ENCODE measurements at regions of chr7 and their contacts with region 1.

Region 1: GRCh38 chr7:104943502-104944343 is 70.3 kb upstream of the KMT2E start:
- DNase-seq: peak; percentile 93
- H3K4me3 Mint-ChIP-seq: peak overlapping the region; percentile 97
- H3K27ac Mint-ChIP-seq: peak overlapping the region; percentile 100
- H3K4me1 Mint-ChIP-seq: peaks cover 56% of the 10 kb centered on the region
- H3K27me3 Mint-ChIP-seq: peaks cover 3% of the 10 kb centered on the region

Region 2: DNA sequence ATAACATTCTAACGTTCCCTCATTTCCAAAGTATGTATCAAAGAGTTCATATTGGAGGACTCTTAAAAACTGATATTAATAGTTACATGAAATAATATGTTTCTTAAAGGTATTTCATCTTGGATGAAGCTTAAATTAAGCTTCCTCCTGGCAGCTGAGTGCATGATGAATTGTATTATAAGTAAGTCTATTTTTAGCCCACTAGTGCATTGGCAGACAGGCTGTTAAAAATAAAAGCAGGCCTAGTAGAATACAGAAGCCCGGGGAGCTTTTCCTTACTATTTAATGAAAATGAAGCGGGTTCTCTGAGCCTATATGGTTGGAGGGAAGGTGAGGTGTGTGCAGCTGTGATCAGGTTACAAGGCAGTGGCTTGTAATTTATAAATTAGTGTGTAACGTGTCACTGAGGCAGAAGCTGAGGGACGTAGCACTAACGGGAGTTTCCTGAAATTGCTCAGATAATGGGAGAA is 60.4 kb before region 1 on chr7:
- intact Hi-C with region 1: no loop called
- DNase-seq: no peak
- H3K4me3 Mint-ChIP-seq: no peak overlapping the region
- H3K27ac Mint-ChIP-seq: no peak overlapping the region
- H3K4me1 Mint-ChIP-seq: peaks cover 15% of the 10 kb centered on the region
- H3K27me3 Mint-ChIP-seq: peaks cover 14% of the 10 kb centered on the region

Region 3: GRCh38 chr7:104900525-104901239 is 43.0 kb before region 1 on chr7:
- intact Hi-C with region 1: no loop called
- DNase-seq: no peak
- H3K4me3 Mint-ChIP-seq: no peak overlapping the region
- H3K27ac Mint-ChIP-seq: no peak overlapping the region
- H3K4me1 Mint-ChIP-seq: peaks cover 6% of the 10 kb centered on the region
- H3K27me3 Mint-ChIP-seq: peaks cover 7% of the 10 kb centered on the region

Region 4: DNA sequence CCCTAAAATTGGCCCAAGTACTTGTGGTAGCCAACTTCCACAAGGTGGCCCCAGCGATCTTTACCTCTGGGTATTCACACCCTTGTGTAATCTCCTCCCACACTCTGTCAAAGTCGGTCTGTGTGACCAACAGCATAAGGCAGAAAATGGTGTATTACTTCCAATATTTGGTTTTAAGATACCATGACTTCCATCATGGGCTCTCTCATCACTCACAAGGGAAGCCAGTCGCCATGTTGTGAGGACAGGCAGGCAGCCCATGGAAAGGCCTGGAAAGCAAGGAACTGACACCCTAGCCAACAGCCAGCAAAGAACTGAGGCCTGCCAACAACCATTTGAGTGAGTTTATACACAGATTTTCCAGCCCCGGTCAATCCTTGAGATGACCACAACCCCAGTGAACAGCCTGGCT is 20.7 kb before region 1 on chr7:
- intact Hi-C with region 1: loop called (anchors 1 kb)
- DNase-seq: peak; percentile 93
- H3K4me3 Mint-ChIP-seq: no peak overlapping the region
- H3K27ac Mint-ChIP-seq: no peak overlapping the region
- H3K4me1 Mint-ChIP-seq: peaks cover 7% of the 10 kb centered on the region
- H3K27me3 Mint-ChIP-seq: peaks cover 4% of the 10 kb centered on the region

Region 5: GRCh38 chr7:104983578-104984539 is 40.1 kb after region 1 on chr7:
- intact Hi-C with region 1: loop called (anchors 1 kb)
- DNase-seq: peak; percentile 96
- H3K4me3 Mint-ChIP-seq: peak overlapping the region; percentile 98
- H3K27ac Mint-ChIP-seq: peak overlapping the region; percentile 100
- H3K4me1 Mint-ChIP-seq: peaks cover 53% of the 10 kb centered on the region
- H3K27me3 Mint-ChIP-seq: no peaks in the 10 kb centered on the region

Region 6: DNA sequence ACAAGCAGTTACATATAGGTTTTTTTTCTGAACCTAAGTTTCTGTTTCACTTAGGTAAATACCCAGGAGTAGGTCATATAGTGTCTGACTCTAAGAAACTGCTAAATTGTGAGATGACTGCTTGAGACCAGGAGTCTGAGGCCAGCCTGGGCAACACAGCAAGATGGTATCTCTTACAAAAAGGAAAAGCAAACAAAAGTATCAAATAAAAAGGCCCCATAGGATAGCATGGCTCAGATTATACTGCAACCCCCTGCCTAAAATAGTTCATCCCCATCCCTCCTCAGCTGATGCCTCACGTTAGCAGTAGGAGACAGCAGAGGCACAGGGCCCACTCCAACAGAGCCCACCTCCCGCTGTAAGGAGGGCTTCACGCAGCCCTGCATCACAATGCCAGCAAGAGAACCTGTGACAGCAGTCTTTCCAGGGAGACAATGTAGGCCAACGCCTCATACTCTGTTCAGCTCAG is 354.8 kb after region 1 on chr7:
- intact Hi-C with region 1: loop called (anchors 5 kb)
- DNase-seq: peak; percentile 76
- H3K4me3 Mint-ChIP-seq: peak overlapping the region; percentile 50
- H3K27ac Mint-ChIP-seq: peak overlapping the region; percentile 72
- H3K4me1 Mint-ChIP-seq: peaks cover 38% of the 10 kb centered on the region
- H3K27me3 Mint-ChIP-seq: no peaks in the 10 kb centered on the region

Region 7: DNA sequence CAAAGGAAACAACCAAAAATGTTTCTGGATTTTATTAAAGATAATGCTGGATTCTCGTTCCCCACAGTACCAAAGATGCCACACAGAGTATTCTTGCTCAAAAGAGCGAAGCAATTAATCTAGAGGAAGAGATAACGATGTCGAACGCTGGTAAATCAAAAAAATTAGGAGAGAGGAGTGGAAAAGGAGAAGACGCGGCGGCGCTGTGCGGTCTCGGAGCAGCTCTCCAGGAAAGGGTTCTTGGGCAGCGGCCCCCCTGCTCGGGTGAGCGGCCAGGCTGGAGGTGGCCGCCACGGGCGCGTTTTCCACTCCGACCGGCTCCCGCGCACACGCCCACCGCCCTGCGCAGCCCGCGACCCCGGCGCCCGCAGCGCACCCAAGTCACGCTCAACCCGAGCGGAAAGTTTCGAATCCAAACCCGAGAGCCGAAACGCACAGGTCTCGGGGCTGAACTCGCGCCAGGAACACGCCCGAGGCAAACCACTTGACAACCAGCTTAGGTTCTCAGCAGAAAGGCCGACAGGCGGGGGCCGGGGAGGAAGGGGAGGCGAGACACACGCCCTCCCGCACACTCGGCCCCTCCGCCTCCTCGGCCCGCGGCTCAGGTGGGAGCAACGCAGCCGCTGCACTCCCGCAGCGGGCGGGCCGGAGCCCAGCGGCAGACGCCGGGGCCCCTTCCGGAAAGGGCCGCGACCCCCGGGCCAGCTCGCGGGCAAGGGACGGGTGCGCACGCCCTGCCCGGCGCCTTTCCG is 444.1 kb after region 1 on chr7:
- intact Hi-C with region 1: loop called (anchors 5 kb)
- DNase-seq: peak; percentile 87
- H3K4me3 Mint-ChIP-seq: peak overlapping the region; percentile 92
- H3K27ac Mint-ChIP-seq: peak overlapping the region; percentile 72
- H3K4me1 Mint-ChIP-seq: peaks cover 23% of the 10 kb centered on the region
- H3K27me3 Mint-ChIP-seq: peaks cover 2% of the 10 kb centered on the region

Region 8: DNA sequence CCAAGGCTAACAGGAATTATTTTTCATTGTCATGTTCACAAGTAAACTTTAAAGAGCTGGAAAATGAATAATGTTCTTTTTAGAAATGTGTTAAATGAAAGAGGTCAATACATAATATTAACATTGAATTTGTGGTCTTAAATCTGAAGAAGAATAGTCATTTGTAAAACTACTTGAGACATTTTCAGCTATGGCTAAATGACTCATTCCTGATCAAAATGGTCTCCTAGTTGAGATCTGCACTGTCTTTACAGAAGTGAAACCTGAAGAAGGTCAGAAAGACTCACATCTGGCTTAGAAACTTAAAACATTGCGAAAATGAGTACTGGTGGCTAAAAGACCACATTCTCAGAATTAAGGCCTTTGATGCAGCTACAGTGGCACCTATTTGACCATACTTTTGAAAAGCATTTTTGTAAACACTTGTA is 1927.3 kb after region 1 on chr7:
- intact Hi-C with region 1: loop called (anchors 10 kb)
- DNase-seq: peak; percentile 63
- H3K4me3 Mint-ChIP-seq: peak overlapping the region; percentile 36
- H3K27ac Mint-ChIP-seq: peak overlapping the region; percentile 68
- H3K4me1 Mint-ChIP-seq: peaks cover 54% of the 10 kb centered on the region
- H3K27me3 Mint-ChIP-seq: no peaks in the 10 kb centered on the region